HCT116 (cell line): ENCODE measurements at regions of chr1 and their contacts with region 1.

Region 1: DNA sequence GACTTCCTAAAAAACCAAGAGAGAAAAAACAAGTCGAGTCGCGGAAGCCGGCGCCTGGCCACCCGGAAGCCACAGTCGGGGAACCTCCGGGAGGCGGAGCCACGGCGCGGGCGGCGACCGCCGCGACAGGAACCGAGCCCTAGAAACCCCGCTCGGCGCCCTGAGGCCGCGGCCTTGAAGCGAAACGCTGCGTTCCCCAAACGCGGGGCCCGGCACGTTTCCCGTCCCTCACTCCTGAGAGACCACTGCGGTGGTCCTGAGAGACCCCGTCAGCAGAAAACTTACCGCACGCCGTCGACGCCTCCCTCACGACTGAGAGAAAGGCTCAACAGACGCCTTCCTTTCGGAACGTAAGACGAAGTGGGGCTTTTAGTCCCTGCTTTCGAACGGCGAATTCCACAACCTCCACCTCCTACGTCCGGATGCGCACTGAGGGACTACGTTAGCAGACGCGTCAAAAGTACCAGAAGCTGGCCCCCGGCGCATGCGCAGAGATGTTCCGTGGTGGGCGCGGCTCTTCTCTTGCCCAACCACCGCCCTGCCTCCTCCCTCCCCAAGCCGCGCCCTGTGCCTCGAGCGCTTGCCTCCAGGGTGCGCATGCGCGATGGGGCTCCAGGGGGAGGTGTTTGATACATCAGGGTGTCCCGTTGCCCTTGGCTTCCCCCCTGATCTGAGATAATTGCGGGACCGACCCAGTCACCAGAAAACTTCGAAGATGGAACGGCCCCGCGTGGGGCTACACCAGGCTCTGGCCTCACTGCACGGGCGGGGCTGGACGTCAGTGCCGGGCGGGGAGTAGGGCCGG is at the start of gene RSRP1:
- DNase-seq: peak; percentile 93
- ATAC-seq: peak; percentile 90
- H3K4me3 ChIP-seq: peak within 1 kb of the TSS; percentile 93 to 98
- H3K27ac ChIP-seq: peak within 1 kb of the TSS; percentile 97
- H3K4me1 ChIP-seq: peaks cover 11 to 17% of the 10 kb centered on the region in 2 experiments
- H3K27me3 ChIP-seq: no peaks in the 10 kb centered on the region
- CTCF ChIP-seq: no peak
- POLR2A ChIP-seq: peak; percentile 99
- RAD21 ChIP-seq: no peak
- total RNA-seq, gene RSRP1: 82.9 TPM

Region 2: DNA sequence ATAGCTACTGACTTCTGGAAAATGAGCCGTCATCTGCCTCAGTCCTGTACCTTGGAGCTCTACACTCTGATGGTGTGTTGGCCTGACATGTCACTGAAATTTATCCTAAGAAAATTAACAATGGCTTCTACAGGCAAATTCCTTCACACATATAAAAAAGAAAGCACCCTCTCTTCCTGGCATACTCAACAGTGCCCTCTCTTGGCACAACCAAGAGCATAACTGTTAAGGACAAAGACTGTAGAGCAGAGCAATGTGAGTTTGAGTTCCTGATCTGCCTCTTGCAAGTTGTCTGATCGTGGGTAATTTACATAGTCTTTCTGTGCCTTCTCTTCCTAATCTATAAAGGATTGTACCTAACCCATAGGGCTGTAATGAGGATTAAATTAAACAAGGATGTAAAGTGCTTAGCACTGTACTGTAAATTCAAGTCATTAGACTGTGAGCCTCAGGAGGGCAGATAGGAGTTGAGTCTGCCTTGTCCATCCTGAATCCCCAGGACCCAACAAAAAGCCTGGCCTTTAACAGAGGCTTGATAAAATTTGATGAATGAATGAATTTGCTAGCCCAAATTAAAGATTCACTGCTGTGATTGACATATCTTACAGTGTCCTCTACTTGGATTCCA is 98.4 kb before region 1 on chr1:
- CTCF ChIA-PET with region 1: no interaction called
- POLR2A ChIA-PET with region 1: no interaction called
- RAD21 ChIA-PET with region 1: no interaction called
- intact Hi-C with region 1: no loop called
- DNase-seq: no peak
- ATAC-seq: peak; percentile 89
- H3K4me3 ChIP-seq: no peak overlapping the region
- H3K27ac ChIP-seq: no peak overlapping the region
- H3K4me1 ChIP-seq: peaks cover 0 to 7% of the 10 kb centered on the region in 2 experiments; a peak in 2 of 4 replicates
- H3K27me3 ChIP-seq: no peaks in the 10 kb centered on the region
- CTCF ChIP-seq: peak; percentile 58 to 71 (median 62); a peak in 5 of 6 replicates
- POLR2A ChIP-seq: no peak
- RAD21 ChIP-seq: peak; percentile 55

Region 3: GRCh38 chr1:25232027-25232865 is 15.0 kb before region 1 on chr1 and contains the start of gene SYF2:
- CTCF ChIA-PET with region 1: interaction called, 3 read pairs
- POLR2A ChIA-PET with region 1: interaction called, 25 read pairs
- RAD21 ChIA-PET with region 1: no interaction called
- intact Hi-C with region 1: no loop called
- DNase-seq: peak; percentile 84
- ATAC-seq: peak; percentile 83
- H3K4me3 ChIP-seq: peak within 1 kb of the TSS; percentile 87 to 96
- H3K27ac ChIP-seq: peak within 1 kb of the TSS; percentile 74
- H3K4me1 ChIP-seq: peaks cover 19 to 25% of the 10 kb centered on the region in 2 experiments
- H3K27me3 ChIP-seq: no peaks in the 10 kb centered on the region
- CTCF ChIP-seq: no peak
- POLR2A ChIP-seq: peak; percentile 54
- RAD21 ChIP-seq: no peak
- total RNA-seq, gene SYF2: 40.4 TPM

Region 4: DNA sequence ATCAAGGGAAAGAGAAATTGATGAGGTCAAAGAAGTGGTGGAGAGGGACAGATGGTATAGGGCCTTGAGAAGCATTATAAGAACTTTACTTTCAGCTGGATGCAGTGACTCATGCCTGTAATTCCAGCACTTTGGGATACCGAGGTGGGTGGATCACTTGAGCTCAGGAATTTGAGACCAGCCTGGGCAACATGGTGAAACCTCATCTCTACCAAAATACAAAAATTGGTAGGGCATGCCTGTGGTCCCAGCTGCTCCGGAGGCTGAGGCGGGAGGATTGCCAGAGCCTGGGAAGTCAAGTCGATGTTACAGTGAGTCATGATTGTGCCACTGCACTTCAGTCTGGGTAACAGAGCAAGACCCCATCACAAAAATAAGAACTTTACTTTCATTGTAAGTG is 96.6 kb after region 1 on chr1:
- CTCF ChIA-PET with region 1: no interaction called
- POLR2A ChIA-PET with region 1: interaction called, 4 read pairs
- RAD21 ChIA-PET with region 1: no interaction called
- intact Hi-C with region 1: loop called (anchors 5 kb)
- DNase-seq: peak; percentile 24
- ATAC-seq: peak; percentile 80
- H3K4me3 ChIP-seq: 0 out of 4 replicates have a peak overlapping the region, but pooled peaks of 1 of the 2 experiments have one; percentile 2
- H3K27ac ChIP-seq: peak overlapping the region; percentile 23; the same call in 1 of the 2 replicates
- H3K4me1 ChIP-seq: peaks cover 24 to 26% of the 10 kb centered on the region in 2 experiments
- H3K27me3 ChIP-seq: no peaks in the 10 kb centered on the region
- CTCF ChIP-seq: no peak
- POLR2A ChIP-seq: no peak
- RAD21 ChIP-seq: no peak